ENCODE measurements at regions of chr15 and their contacts with region 1.

Region 1: GRCh38 chr15:90221246-90221900 is 12.4 kb downstream of the CIB1 start:
- H3K4me3 ChIP-seq: no peak overlapping the region
- H3K27ac ChIP-seq: no peak overlapping the region
- H3K4me1 ChIP-seq: peaks cover 6% of the 10 kb centered on the region; the same call in 1 of the 2 replicates
- CTCF ChIP-seq: peak; percentile 75

Region 2: GRCh38 chr15:90143166-90143655 is 78.2 kb before region 1 on chr15:
- CTCF ChIA-PET with region 1: interaction called, 275 read pairs
- POLR2A ChIA-PET with region 1: interaction called, 9 read pairs
- H3K4me3 ChIP-seq: no peak overlapping the region
- H3K27ac ChIP-seq: no peak overlapping the region
- H3K4me1 ChIP-seq: no peaks in the 10 kb centered on the region
- CTCF ChIP-seq: peak; percentile 94

Region 3: DNA sequence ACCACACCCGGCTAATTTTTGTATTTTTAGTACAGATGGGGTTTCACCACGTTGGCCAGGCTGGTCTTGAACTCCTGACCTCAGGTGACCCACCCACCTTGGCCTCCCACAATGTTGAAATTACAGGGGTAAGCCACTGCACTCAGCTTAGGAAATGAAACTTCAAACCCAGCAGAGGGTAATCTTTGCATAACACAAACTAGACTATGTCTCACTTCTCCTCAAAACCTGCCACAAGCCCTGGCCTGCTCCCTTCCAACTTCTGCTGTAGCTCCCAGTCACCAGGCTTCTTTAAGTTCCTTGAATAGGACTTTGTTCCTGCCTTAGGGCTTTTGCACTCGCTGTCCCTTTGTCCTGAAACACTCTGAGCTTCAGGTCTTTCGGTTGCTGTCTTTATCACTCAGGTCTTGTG is 59.4 kb before region 1 on chr15:
- CTCF ChIA-PET with region 1: interaction called, 39 read pairs
- POLR2A ChIA-PET with region 1: interaction called, 3 read pairs
- H3K4me3 ChIP-seq: no peak overlapping the region
- H3K27ac ChIP-seq: no peak overlapping the region
- H3K4me1 ChIP-seq: peaks cover 4% of the 10 kb centered on the region
- CTCF ChIP-seq: no peak

Region 4: GRCh38 chr15:90201130-90201949 is 20.0 kb before region 1 on chr15 and contains the start of gene SEMA4B:
- CTCF ChIA-PET with region 1: interaction called, 33 read pairs
- POLR2A ChIA-PET with region 1: interaction called, 6 read pairs
- H3K4me3 ChIP-seq: peak within 1 kb of the TSS; percentile 67
- H3K27ac ChIP-seq: peak within 1 kb of the TSS; percentile 56; the same call in 1 of the 2 replicates
- H3K4me1 ChIP-seq: peaks cover 8% of the 10 kb centered on the region
- CTCF ChIP-seq: peak; percentile 21; the same call in 1 of the 2 replicates

Region 5: DNA sequence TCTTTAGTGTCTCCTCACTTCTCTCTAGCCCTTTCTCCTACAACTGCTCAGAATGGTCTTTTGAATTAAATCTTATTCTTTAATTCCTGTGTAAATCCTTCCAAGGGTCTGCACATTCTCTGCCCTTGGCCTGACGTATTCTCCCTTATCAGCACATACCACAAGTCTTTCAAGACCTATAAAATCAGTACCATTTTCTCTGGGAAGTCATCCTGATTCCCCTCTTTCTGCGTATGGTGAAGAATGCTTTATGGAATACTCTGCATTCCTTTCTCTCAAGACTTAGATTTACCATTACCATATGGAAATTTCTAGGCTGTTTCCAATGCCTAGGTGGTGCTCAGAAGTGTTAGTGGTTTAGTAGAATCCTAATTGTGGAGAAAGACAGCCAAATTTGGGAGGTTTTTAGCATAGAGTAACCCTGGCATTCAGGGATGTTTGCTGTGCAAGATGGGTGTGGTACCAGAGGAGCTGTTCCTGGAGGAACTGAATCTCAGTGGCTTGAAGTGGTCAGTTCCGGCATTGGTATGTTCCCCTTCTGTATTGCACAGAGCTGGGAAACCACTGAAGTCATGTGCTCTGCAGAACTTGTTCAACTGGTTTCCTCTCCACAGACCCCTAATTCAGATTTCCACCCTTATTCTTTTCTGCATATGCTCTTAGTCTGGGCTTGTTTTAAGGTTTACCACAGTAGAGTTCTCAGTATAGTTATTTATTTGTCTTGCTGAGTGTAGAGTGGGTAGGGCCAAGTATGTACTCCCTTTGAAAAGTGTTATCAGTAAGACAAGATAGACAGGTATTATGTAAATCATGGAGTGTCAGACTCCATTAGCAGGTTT is 191.2 kb after region 1 on chr15:
- CTCF ChIA-PET with region 1: no interaction called
- POLR2A ChIA-PET with region 1: no interaction called
- H3K4me3 ChIP-seq: no peak overlapping the region
- H3K27ac ChIP-seq: no peak overlapping the region
- H3K4me1 ChIP-seq: peaks cover 29% of the 10 kb centered on the region
- CTCF ChIP-seq: no peak

Measured in HEK293 (cell line).